ENCODE measurements at regions of chr16 and their contacts with region 1.

Region 1: DNA sequence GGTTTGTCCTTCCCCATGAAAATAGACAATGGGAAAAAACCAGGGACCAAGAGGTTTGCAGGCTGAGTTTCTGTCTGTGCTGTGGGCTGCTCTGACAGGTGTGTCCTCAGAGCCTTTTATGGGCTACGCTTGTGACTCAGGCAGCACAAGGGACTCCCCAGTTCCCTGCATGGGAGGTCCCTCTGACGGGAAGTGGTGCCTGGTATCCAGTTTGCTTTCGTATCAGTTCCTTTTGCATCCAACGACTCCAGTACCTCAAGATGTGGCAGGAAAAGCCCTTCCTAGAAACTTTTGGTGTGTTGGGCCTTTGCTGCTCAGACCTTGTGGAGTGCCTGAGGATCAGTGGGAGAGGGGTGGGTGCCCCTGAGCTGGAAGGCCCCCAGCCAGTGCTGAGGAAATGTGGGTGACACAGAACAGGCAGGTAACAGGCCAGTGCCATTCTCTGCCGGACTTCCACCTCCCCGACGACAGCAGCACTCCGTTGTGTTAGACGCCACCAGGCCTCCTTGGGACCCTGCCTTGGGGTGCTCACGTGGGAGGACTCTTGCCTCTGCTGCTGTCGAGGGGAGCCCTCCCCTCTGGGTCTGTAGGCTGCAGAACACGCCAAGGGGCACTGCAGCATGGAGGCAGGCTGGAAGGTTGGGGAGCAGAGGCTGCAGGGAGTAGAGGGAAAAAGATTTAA is 38.4 kb upstream of the IRF8 start:
- DNase-seq: peak in 2 of 3 donors; percentile 52 to 84
- H3K4me3 ChIP-seq: no peak overlapping the region
- H3K4me3 Mint-ChIP-seq: no peak overlapping the region
- H3K27ac ChIP-seq: no peak overlapping the region
- H3K27ac Mint-ChIP-seq: peak overlapping the region in 5 of 7 donors; percentile 19 to 88 (median 41)
- H3K4me1 ChIP-seq: peaks cover 57 to 64% of the 10 kb centered on the region in 2 donors
- H3K4me1 Mint-ChIP-seq: peaks cover 70% of the 10 kb centered on the region
- H3K27me3 ChIP-seq: no peaks in the 10 kb centered on the region
- H3K27me3 Mint-ChIP-seq: peaks cover 4 to 7% (median 4%) of the 10 kb centered on the region in 3 donors
- CTCF ChIP-seq: no peak

Region 2: DNA sequence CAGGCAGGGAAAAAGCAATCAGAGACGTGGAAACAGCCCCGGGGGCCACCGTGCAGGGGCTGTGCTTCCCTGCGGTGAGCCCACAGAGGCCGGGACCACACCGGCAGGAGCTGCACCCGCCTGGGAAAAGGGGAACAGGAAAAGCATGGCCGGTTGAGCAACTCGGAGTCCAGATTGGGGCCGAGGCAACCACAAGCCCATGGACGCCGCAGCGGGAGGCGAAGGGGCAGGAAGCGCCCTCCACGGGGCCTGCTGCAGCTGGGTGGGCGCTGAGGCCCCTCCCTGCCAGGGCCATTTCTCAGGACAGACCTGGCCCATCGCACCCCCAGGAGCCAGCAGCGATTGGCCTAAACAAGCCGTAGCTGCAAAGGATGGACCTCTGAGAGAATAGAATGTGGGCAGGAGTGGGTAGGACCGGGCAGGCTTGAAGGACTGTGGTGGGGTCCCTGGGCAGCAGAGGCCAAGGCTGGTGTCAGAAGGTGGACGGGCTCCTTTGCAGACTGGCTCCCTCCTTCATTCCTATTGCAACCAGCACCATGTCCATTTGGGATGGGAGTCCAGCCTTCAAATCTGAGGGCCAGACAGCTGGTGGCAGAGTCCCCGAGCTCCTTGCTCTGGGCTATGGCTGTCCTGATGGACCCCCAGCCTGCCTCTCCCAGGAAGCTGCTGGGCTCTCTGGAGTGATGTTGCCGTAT is 30.7 kb before region 1 on chr16:
- intact Hi-C with region 1: loop called in 1 of 2 experiments (anchors 5 kb)
- DNase-seq: peak; percentile 58 to 84 (median 82)
- H3K4me3 ChIP-seq: peak overlapping the region in 2 of 3 experiments; percentile 1 to 64
- H3K4me3 Mint-ChIP-seq: peak overlapping the region; percentile 69 to 84
- H3K27ac ChIP-seq: peak overlapping the region; percentile 64 to 84
- H3K27ac Mint-ChIP-seq: peak overlapping the region; percentile 89 to 94 (median 91)
- H3K4me1 ChIP-seq: peaks cover 37 to 39% of the 10 kb centered on the region in 2 donors
- H3K4me1 Mint-ChIP-seq: peaks cover 63% of the 10 kb centered on the region
- H3K27me3 ChIP-seq: no peaks in the 10 kb centered on the region
- H3K27me3 Mint-ChIP-seq: peaks cover 3 to 9% (median 6%) of the 10 kb centered on the region in 3 donors
- CTCF ChIP-seq: no peak